A549 (cell line): ENCODE measurements at regions of chr16 and their contacts with region 1.

Region 1: GRCh38 chr16:21584817-21585216 is 14.6 kb upstream of the METTL9 start:
- DNase-seq: no peak
- ATAC-seq: peak in 1 of 2 experiments; percentile 22; a peak in 2 of 6 replicates
- H3K4me3 ChIP-seq: no peak overlapping the region
- H3K27ac ChIP-seq: no peak overlapping the region
- H3K4me1 ChIP-seq: no peaks in the 10 kb centered on the region
- CTCF ChIP-seq: no peak
- EP300 ChIP-seq: no peak
- POLR2A ChIP-seq: no peak
- RAD21 ChIP-seq: no peak

Region 2: GRCh38 chr16:21277927-21278706 is 306.7 kb before region 1 on chr16 and contains the start of gene CRYM:
- CTCF ChIA-PET with region 1: no interaction called
- POLR2A ChIA-PET with region 1: no interaction called
- DNase-seq: peak; percentile 52 to 82
- ATAC-seq: peak; percentile 97 to 99
- H3K4me3 ChIP-seq: peak within 1 kb of the TSS; percentile 54
- H3K27ac ChIP-seq: peak within 1 kb of the TSS; percentile 58 to 76
- H3K4me1 ChIP-seq: no peaks in the 10 kb centered on the region
- CTCF ChIP-seq: peak; percentile 87
- EP300 ChIP-seq: no peak
- POLR2A ChIP-seq: no peak
- RAD21 ChIP-seq: peak; percentile 62 to 81
- polyA plus RNA-seq, gene CRYM: 3.1 and 3.4 TPM in 2 replicates

Region 3: GRCh38 chr16:21599233-21600030 is 14.6 kb after region 1 on chr16 and contains the start of gene METTL9:
- CTCF ChIA-PET with region 1: interaction called, 13 read pairs
- POLR2A ChIA-PET with region 1: no interaction called
- DNase-seq: peak; percentile 87 to 95
- ATAC-seq: peak; percentile 96 to 98
- H3K4me3 ChIP-seq: peak within 1 kb of the TSS; percentile 84
- H3K27ac ChIP-seq: peak within 1 kb of the TSS; percentile 95 to 98
- H3K4me1 ChIP-seq: peaks cover 20% of the 10 kb centered on the region
- CTCF ChIP-seq: no peak
- EP300 ChIP-seq: no peak
- POLR2A ChIP-seq: peak; percentile 71
- RAD21 ChIP-seq: no peak
- polyA plus RNA-seq, gene METTL9: 110 and 124 TPM in 2 replicates

Region 4: DNA sequence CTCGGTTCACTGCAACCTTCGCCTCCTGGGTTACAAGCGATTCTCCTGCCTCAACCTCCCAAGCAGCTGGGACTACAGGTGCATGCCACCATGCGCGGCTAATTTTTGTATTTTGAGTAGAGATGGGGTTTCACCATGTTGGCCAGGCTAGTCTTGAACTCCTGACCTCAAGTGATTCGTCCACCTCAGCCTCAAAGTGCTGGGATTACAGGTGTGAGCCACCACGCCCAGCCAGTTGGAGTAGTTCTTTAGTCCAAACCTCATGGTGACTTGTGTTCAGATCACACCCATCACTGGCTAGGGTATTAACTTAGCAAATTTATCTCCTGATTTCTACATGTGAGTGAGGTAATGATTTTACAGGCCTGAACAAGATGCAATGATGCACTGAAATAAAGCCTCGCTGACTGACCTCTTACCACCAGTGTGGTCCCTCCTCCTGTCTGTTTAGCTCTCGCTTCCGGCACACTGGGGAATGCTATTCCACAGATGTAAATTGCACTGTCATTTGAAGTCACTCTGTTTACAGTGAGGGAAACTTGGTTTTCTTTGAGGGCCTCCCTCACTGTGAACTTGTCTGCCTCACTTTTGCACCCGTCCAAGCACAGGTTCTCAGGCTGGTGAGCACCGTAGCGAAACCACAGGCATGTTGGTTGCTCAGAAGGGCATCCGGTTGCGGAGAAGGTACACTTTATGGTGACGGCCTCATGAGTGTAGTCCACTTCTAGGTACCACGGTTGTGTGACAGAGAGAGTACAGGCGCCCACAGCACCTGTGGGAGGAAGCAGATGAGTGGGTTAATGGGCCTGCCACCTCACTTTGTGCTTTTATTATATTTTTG is 62.1 kb after region 1 on chr16:
- CTCF ChIA-PET with region 1: interaction called, 26 read pairs
- POLR2A ChIA-PET with region 1: no interaction called
- DNase-seq: no peak
- ATAC-seq: no peak
- H3K4me3 ChIP-seq: no peak overlapping the region
- H3K27ac ChIP-seq: no peak overlapping the region
- H3K4me1 ChIP-seq: no peaks in the 10 kb centered on the region
- CTCF ChIP-seq: no peak
- EP300 ChIP-seq: no peak
- POLR2A ChIP-seq: no peak
- RAD21 ChIP-seq: no peak